ENCODE measurements at regions of chr2 and their contacts with region 1.

Region 1: DNA sequence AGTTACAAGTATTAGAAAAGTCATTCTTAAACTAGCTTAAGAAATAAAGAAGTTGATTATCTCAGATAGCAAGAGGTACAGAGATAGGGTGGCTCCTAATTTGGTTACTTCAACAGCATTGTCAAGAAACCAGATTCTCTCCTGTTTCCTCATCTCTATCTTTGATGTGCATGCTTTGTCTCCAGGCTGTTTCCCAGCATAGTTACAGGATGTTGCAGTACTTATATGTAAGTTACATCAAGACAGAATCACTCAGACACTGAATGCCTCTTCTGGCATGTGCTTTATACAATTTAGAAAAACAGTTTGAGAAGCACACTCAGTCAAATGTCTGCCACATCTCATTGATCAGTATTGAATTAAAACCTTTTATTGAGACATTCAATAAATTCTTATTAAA is 189.5 kb upstream of the UBE2E3 start:
- DNase-seq: no peak
- ATAC-seq: no peak
- H3K4me3 ChIP-seq: no peak overlapping the region
- H3K4me3 Mint-ChIP-seq: no peak overlapping the region
- H3K27ac ChIP-seq: no peak overlapping the region
- H3K27ac Mint-ChIP-seq: no peak overlapping the region
- H3K4me1 ChIP-seq: no peaks in the 10 kb centered on the region
- H3K4me1 Mint-ChIP-seq: no peaks in the 10 kb centered on the region
- H3K27me3 ChIP-seq: peaks cover 2% of the 10 kb centered on the region
- H3K27me3 Mint-ChIP-seq: no peaks in the 10 kb centered on the region
- CTCF ChIP-seq: no peak

Region 2: GRCh38 chr2:180707884-180708205 is 83.0 kb before region 1 on chr2:
- intact Hi-C with region 1: loop called (anchors 10 kb)
- DNase-seq: no peak
- ATAC-seq: no peak
- H3K4me3 ChIP-seq: no peak overlapping the region
- H3K4me3 Mint-ChIP-seq: no peak overlapping the region
- H3K27ac ChIP-seq: no peak overlapping the region
- H3K27ac Mint-ChIP-seq: no peak overlapping the region
- H3K4me1 ChIP-seq: no peaks in the 10 kb centered on the region
- H3K4me1 Mint-ChIP-seq: no peaks in the 10 kb centered on the region
- H3K27me3 ChIP-seq: no peaks in the 10 kb centered on the region
- H3K27me3 Mint-ChIP-seq: no peaks in the 10 kb centered on the region
- CTCF ChIP-seq: no peak

Region 3: DNA sequence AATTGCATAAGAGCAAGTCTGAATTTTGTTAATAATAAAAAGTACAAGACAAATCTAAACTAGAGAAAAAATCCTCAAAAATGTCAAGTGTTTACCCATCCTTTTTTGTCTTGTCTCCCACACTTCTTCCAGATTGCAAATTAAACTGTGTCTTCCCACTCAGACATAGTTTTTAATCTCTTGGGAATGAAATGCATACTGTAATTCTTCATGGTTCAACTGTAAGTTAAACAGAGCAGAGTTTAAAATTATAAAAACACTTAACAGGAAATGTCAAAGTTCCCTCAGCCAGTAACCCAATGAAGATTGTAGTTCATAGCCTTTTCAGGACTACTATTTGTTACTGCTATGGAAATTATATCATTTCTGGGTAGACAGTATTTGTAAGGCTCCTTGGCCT is 361.3 kb after region 1 on chr2:
- intact Hi-C with region 1: no loop called
- DNase-seq: no peak
- ATAC-seq: peak in 2 of 3 donors; percentile 26 to 39
- H3K4me3 ChIP-seq: no peak overlapping the region
- H3K4me3 Mint-ChIP-seq: no peak overlapping the region
- H3K27ac ChIP-seq: peak overlapping the region; percentile 53
- H3K27ac Mint-ChIP-seq: peak overlapping the region; percentile 61 to 73
- H3K4me1 ChIP-seq: no peaks in the 10 kb centered on the region
- H3K4me1 Mint-ChIP-seq: peaks cover 43 to 46% of the 10 kb centered on the region in 2 donors
- H3K27me3 ChIP-seq: no peaks in the 10 kb centered on the region
- H3K27me3 Mint-ChIP-seq: no peaks in the 10 kb centered on the region
- CTCF ChIP-seq: no peak

Measured in natural killer cell (primary cell).